ENCODE measurements at regions of chr2 and their contacts with region 1.

Region 1: DNA sequence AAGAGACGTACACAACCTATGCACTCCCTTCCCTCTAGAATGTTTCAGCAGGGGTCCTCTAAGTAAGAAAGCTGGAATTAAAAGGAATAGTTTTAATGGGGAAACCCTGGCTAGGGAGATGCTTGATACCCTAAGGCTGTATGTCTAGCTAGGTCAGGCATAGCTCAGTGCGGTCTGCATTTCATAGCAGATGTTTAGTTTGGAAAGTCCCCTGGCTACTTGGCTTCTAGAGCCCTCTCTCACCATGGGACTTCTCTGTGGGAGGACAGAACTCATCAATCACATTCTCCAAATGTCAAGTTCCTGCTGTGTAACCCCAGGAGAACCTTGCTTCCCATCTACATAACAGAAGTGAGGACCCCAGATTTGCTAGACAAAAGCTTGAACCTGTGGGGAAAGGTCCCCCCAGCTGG is 24.1 kb upstream of the ANXA4 start:
- DNase-seq: no peak
- ATAC-seq: no peak
- H3K4me3 Mint-ChIP-seq: no peak overlapping the region
- H3K27ac Mint-ChIP-seq: no peak overlapping the region
- H3K4me1 Mint-ChIP-seq: peaks cover 4% of the 10 kb centered on the region
- H3K27me3 Mint-ChIP-seq: peaks cover 39% of the 10 kb centered on the region
- CTCF ChIP-seq: no peak

Region 2: GRCh38 chr2:69026026-69026425 is 691.8 kb before region 1 on chr2:
- CTCF ChIA-PET with region 1: no interaction called
- POLR2A ChIA-PET with region 1: no interaction called
- intact Hi-C with region 1: loop called (anchors 2 kb)
- DNase-seq: no peak
- ATAC-seq: no peak
- H3K4me3 Mint-ChIP-seq: no peak overlapping the region
- H3K27ac Mint-ChIP-seq: no peak overlapping the region
- H3K4me1 Mint-ChIP-seq: no peaks in the 10 kb centered on the region
- H3K27me3 Mint-ChIP-seq: peaks cover 13% of the 10 kb centered on the region
- CTCF ChIP-seq: no peak

Region 3: GRCh38 chr2:69375494-69376353 is 342.1 kb before region 1 on chr2:
- CTCF ChIA-PET with region 1: no interaction called
- POLR2A ChIA-PET with region 1: no interaction called
- intact Hi-C with region 1: loop called (anchors 1 kb)
- DNase-seq: no peak
- ATAC-seq: no peak
- H3K4me3 Mint-ChIP-seq: no peak overlapping the region
- H3K27ac Mint-ChIP-seq: no peak overlapping the region
- H3K4me1 Mint-ChIP-seq: peaks cover 8% of the 10 kb centered on the region
- H3K27me3 Mint-ChIP-seq: no peaks in the 10 kb centered on the region
- CTCF ChIP-seq: no peak

Region 4: GRCh38 chr2:69436938-69437750 is 280.7 kb before region 1 on chr2 and contains the start of gene NFU1:
- CTCF ChIA-PET with region 1: interaction called, 6 read pairs
- POLR2A ChIA-PET with region 1: no interaction called
- intact Hi-C with region 1: loop called (anchors 1 kb)
- DNase-seq: peak; percentile 85
- ATAC-seq: peak; percentile 95
- H3K4me3 Mint-ChIP-seq: peak within 1 kb of the TSS; percentile 96
- H3K27ac Mint-ChIP-seq: peak within 1 kb of the TSS; percentile 93
- H3K4me1 Mint-ChIP-seq: peaks cover 34% of the 10 kb centered on the region
- H3K27me3 Mint-ChIP-seq: no peaks in the 10 kb centered on the region
- CTCF ChIP-seq: no peak
- total RNA-seq, gene NFU1: 24.3 and 31.1 TPM in 2 replicates

Region 5: GRCh38 chr2:69559442-69560146 is 158.3 kb before region 1 on chr2:
- CTCF ChIA-PET with region 1: interaction called, 15 read pairs
- POLR2A ChIA-PET with region 1: no interaction called
- intact Hi-C with region 1: loop called (anchors 1 kb)
- DNase-seq: no peak
- ATAC-seq: peak; percentile 42
- H3K4me3 Mint-ChIP-seq: no peak overlapping the region
- H3K27ac Mint-ChIP-seq: no peak overlapping the region
- H3K4me1 Mint-ChIP-seq: peaks cover 3% of the 10 kb centered on the region
- H3K27me3 Mint-ChIP-seq: peaks cover 14% of the 10 kb centered on the region
- CTCF ChIP-seq: peak; percentile 45

Region 6: DNA sequence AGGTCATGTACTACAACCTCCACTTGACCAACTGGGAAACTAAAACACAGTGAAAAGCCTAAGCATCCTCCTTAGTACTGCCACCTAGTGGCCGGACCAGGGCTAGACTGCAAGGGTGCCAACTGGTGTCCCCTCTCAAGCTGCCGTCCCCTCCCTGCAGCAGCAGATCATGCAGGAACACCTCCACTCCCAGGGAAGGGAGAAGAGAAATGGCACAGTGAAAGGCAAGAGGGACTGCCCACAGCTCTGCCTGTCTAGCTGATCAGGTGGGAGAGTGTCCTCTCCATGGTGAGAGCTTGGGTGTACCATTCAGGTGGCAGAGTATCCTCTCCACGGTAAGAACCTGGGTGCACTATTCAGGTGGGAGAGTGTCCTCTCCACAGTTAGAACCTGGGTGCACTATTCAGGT is 152.4 kb before region 1 on chr2:
- CTCF ChIA-PET with region 1: interaction called, 15 read pairs
- POLR2A ChIA-PET with region 1: no interaction called
- intact Hi-C with region 1: loop called (anchors 1 kb)
- DNase-seq: peak; percentile 43
- ATAC-seq: peak; percentile 52
- H3K4me3 Mint-ChIP-seq: no peak overlapping the region
- H3K27ac Mint-ChIP-seq: no peak overlapping the region
- H3K4me1 Mint-ChIP-seq: no peaks in the 10 kb centered on the region
- H3K27me3 Mint-ChIP-seq: peaks cover 20% of the 10 kb centered on the region
- CTCF ChIP-seq: peak; percentile 25

Region 7: GRCh38 chr2:69693061-69693774 is 24.6 kb before region 1 on chr2:
- CTCF ChIA-PET with region 1: interaction called, 5 read pairs
- POLR2A ChIA-PET with region 1: no interaction called
- intact Hi-C with region 1: loop called (anchors 2 kb)
- DNase-seq: peak; percentile 54
- ATAC-seq: peak; percentile 94
- H3K4me3 Mint-ChIP-seq: peak overlapping the region; percentile 33
- H3K27ac Mint-ChIP-seq: peak overlapping the region; percentile 57
- H3K4me1 Mint-ChIP-seq: peaks cover 28% of the 10 kb centered on the region
- H3K27me3 Mint-ChIP-seq: peaks cover 41% of the 10 kb centered on the region
- CTCF ChIP-seq: no peak

Region 8: DNA sequence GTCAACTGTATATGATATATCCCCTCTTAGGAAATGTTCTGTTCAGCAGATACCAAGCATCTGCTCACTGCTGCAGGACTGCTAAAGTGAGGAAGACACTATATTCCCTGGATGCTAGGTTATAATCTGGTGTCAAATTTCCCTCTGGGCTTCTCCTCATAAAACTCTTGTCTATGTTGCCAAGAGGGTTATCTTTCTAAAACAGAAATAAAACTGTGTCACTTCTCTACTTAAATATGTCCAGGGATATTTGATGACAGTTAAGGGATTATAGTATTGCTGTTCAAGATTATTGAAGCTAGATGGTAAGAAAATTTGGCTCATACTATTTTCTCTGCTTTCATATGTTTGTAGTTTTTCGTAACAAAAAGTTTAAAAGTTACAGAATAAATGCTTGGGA is 145.4 kb after region 1 on chr2:
- CTCF ChIA-PET with region 1: no interaction called
- POLR2A ChIA-PET with region 1: no interaction called
- intact Hi-C with region 1: no loop called
- DNase-seq: no peak
- ATAC-seq: no peak
- H3K4me3 Mint-ChIP-seq: no peak overlapping the region
- H3K27ac Mint-ChIP-seq: no peak overlapping the region
- H3K4me1 Mint-ChIP-seq: no peaks in the 10 kb centered on the region
- H3K27me3 Mint-ChIP-seq: no peaks in the 10 kb centered on the region
- CTCF ChIP-seq: no peak